Gastrocnemius medialis (tissue), 4 donors: ENCODE measurements at regions of chr14 and their contacts with region 1.

Region 1: GRCh38 chr14:95534299-95535225 is at the start of gene GLRX5:
- DNase-seq: peak; percentile 100
- ATAC-seq: peak; percentile 95 to 96
- H3K4me3 ChIP-seq: peak within 1 kb of the TSS; percentile 84 to 99 (median 94)
- H3K27ac ChIP-seq: peak within 1 kb of the TSS; percentile 91 to 95 (median 92)
- H3K4me1 ChIP-seq: peaks cover 83 to 86% of the 10 kb centered on the region in 2 donors
- H3K27me3 ChIP-seq: no peaks in the 10 kb centered on the region
- CTCF ChIP-seq: peak in 1 of 5 experiments; percentile 33
- POLR2A ChIP-seq: peak; percentile 90
- total RNA-seq, gene GLRX5: 28.0 to 83.2 (median 74.0) TPM

Region 2: GRCh38 chr14:95140060-95140858 is 394.3 kb before region 1 on chr14:
- in situ Hi-C with region 1: loop called in 1 of 4 experiments (anchors 25 kb)
- intact Hi-C with region 1: no loop called
- DNase-seq: no peak
- ATAC-seq: no peak
- H3K4me3 ChIP-seq: no peak overlapping the region
- H3K27ac ChIP-seq: peak overlapping the region in 2 of 4 donors; percentile 7 to 19
- H3K4me1 ChIP-seq: peaks cover 44 to 51% of the 10 kb centered on the region in 2 donors
- H3K27me3 ChIP-seq: no peaks in the 10 kb centered on the region
- CTCF ChIP-seq: no peak
- POLR2A ChIP-seq: no peak

Region 3: DNA sequence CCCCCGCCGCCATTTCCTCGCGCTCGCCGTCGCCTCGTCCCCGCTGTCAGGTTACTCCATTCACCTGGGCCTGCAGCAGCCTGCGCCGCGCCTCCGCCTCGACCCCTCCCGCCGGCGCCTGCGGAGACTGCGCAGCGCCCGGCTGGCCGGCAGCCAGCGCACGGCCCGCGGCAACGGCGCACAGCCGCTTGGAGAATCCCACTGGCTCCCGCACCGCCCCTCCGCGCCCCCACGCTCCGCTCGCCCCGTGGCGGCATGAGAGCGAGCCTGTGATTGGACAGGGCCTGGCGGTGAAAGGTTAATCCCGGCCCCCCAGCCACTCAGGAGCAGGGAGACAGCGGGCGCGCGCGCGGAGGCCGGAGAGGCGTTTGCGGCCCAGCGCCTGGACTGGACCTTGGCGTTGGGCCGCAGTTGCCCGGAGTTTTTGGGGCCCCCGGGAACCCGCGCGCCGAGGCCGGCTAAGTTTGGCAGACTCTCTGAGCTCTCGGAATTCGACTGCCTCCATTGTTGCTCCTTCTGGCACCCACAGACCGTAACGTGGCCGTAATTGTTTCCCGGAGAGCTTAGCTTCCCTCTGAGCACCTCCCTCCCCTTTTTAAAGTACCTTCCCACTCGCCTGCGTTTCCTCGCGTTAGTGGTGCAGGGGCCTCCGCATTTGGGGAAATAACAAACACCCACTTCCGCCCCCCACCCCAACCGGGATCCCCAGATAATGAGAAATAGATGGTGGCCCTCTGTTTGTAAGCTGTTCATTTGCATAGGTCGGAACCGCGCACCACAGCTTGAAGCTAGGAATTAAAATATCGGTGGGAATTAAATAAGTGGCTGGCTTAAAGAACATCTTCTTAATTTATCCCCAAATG is 377.0 kb before region 1 on chr14 and contains the start of gene DICER1:
- in situ Hi-C with region 1: loop called in 1 of 4 experiments (anchors 25 kb)
- intact Hi-C with region 1: loop called (anchors 10 kb)
- DNase-seq: peak; percentile 96
- ATAC-seq: peak; percentile 83 to 87
- H3K4me3 ChIP-seq: peak within 1 kb of the TSS; percentile 74 to 80 (median 77)
- H3K27ac ChIP-seq: peak within 1 kb of the TSS; percentile 90 to 95 (median 92)
- H3K4me1 ChIP-seq: peaks cover 24 to 39% of the 10 kb centered on the region in 2 donors
- H3K27me3 ChIP-seq: no peaks in the 10 kb centered on the region
- CTCF ChIP-seq: peak in 2 of 5 experiments; percentile 7 to 21
- POLR2A ChIP-seq: peak; percentile 75 to 77
- total RNA-seq, gene DICER1: 29.4 to 63.7 (median 37.9) TPM

Region 4: GRCh38 chr14:95291859-95292542 is 242.6 kb before region 1 on chr14:
- in situ Hi-C with region 1: no loop called
- intact Hi-C with region 1: loop called (anchors 10 kb)
- DNase-seq: peak; percentile 53 to 70
- ATAC-seq: peak; percentile 30 to 47
- H3K4me3 ChIP-seq: peak overlapping the region in 2 of 4 donors; percentile 5 to 28
- H3K27ac ChIP-seq: peak overlapping the region; percentile 53 to 81 (median 76)
- H3K4me1 ChIP-seq: peaks cover 12 to 18% of the 10 kb centered on the region in 2 donors
- H3K27me3 ChIP-seq: no peaks in the 10 kb centered on the region
- CTCF ChIP-seq: no peak
- POLR2A ChIP-seq: no peak

Region 5: DNA sequence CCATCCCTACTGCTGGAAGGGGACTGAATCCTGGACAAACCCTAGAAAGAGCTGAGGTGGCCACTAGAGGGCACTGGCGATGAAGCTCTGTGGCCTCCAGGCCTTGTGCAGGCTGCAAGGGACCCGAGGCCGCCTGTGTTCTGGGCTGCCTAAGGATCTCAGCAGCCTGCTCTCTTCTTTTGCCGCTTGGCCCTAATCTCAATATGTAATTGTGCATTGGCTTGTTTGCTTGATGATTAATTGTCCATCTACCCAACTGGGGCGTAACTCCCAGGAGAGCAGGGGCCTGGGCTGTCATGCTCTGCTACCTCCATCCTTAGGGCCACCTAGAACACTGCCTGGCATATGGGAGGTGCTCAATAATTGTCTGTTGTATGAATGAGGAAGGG is 91.9 kb before region 1 on chr14:
- in situ Hi-C with region 1: loop called (anchors 5 kb)
- intact Hi-C with region 1: no loop called
- DNase-seq: peak; percentile 55 to 75
- ATAC-seq: peak; percentile 92 to 99
- H3K4me3 ChIP-seq: no peak overlapping the region
- H3K27ac ChIP-seq: no peak overlapping the region
- H3K4me1 ChIP-seq: no peaks in the 10 kb centered on the region
- H3K27me3 ChIP-seq: no peaks in the 10 kb centered on the region
- CTCF ChIP-seq: peak; percentile 70 to 89 (median 84)
- POLR2A ChIP-seq: no peak

Region 6: GRCh38 chr14:95507701-95508103 is 26.9 kb before region 1 on chr14:
- in situ Hi-C with region 1: no loop called
- intact Hi-C with region 1: loop called (anchors 2 kb)
- DNase-seq: peak; percentile 48 to 76
- ATAC-seq: peak; percentile 55 to 69
- H3K4me3 ChIP-seq: no peak overlapping the region
- H3K27ac ChIP-seq: peak overlapping the region; percentile 74 to 84 (median 82)
- H3K4me1 ChIP-seq: peaks cover 63 to 72% of the 10 kb centered on the region in 2 donors
- H3K27me3 ChIP-seq: no peaks in the 10 kb centered on the region
- CTCF ChIP-seq: no peak
- POLR2A ChIP-seq: no peak

Region 7: DNA sequence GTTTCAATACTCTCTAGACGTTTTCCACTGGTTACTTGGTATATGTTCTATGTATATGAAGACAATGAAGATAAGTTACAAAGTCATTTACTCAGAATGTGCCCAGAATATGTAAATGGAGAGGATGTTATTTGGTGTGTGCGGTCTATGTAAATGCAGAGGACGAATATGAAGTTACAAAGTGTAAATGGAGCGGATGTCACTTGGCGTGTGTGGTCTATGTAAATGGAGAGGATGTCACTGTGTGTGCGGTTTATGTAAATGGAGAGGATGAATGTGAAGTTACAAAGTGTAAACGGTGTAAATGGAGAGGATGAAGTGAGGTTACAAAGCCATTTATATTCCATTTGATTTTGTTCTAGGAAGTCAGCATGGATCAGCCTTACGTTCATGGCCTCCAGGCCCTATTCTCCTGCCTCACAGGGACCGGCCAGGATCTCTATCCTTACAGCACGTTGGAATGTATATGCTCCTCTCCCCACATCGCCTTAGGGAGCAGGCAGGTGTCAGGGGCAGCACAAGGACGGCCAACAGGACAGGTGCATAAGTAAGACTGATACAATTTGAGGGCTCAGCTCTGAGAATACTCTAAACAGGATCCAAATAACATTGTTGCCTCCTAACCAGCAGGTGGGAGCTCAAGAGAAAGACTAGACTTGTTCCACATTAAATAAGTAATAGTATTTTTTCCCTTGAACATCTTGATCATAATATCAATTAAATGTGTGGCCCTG is 42.7 kb after region 1 on chr14:
- in situ Hi-C with region 1: no loop called
- intact Hi-C with region 1: no loop called
- DNase-seq: no peak
- ATAC-seq: no peak
- H3K4me3 ChIP-seq: no peak overlapping the region
- H3K27ac ChIP-seq: no peak overlapping the region
- H3K4me1 ChIP-seq: no peaks in the 10 kb centered on the region
- H3K27me3 ChIP-seq: no peaks in the 10 kb centered on the region
- CTCF ChIP-seq: no peak
- POLR2A ChIP-seq: no peak